CD8-positive, alpha-beta T cell (primary cell): ENCODE measurements at regions of chr5 and their contacts with region 1.

Region 1: DNA sequence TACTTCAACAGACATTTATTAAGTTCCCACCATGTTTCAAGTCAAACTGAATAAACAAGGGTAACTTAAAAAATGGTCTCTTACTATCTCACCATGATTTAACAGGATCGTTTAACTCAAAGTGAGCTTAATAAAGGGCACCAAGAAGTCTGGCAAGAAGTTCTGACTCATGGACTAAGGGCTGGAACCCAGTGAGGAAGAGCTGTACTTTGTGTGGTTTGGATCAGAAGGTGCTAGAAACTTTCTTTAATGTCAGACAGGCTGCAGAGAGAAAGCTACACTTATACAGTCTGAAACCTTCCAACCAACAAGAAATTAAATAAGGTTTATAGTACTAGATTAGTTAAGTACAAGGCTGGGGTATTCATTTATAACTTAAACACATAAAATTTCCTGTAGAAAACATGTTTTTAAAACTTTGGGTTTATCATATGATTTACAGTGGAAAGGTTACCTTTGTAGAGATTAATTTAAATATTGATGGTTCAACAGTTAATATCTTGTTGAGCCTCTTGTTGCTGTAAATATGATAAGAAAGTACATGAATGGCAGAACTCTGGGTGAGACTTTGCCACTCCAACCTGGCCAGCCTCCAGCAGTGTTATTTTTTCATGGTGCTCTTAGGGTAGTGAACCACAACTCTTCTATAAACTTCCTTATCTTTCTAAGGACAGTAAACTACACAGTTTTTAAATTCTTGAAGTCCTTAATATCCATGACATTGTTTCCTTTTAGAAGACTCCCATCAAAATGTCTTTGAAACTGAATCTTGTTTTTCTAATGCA is 162.8 kb downstream of the MAN2A1 start:
- DNase-seq: peak in 2 of 9 experiments; percentile 31 to 49
- ATAC-seq: peak; percentile 45
- H3K4me3 ChIP-seq: no peak overlapping the region
- H3K4me3 Mint-ChIP-seq: peak overlapping the region; percentile 24
- H3K27ac ChIP-seq: peak overlapping the region in 1 of 2 experiments; percentile 36
- H3K27ac Mint-ChIP-seq: peak overlapping the region; percentile 76
- H3K4me1 ChIP-seq: peaks cover 84% of the 10 kb centered on the region
- H3K4me1 Mint-ChIP-seq: peaks cover 87% of the 10 kb centered on the region
- H3K27me3 ChIP-seq: no peaks in the 10 kb centered on the region
- H3K27me3 Mint-ChIP-seq: no peaks in the 10 kb centered on the region
- CTCF ChIP-seq: no peak

Region 2: GRCh38 chr5:109812698-109813097 is 39.9 kb before region 1 on chr5:
- CTCF ChIA-PET with region 1: no interaction called
- POLR2A ChIA-PET with region 1: interaction called, 3 read pairs
- intact Hi-C with region 1: loop called in 1 of 2 experiments (anchors 5 kb)
- DNase-seq: no peak
- ATAC-seq: no peak
- H3K4me3 ChIP-seq: no peak overlapping the region
- H3K4me3 Mint-ChIP-seq: no peak overlapping the region
- H3K27ac ChIP-seq: no peak overlapping the region
- H3K27ac Mint-ChIP-seq: no peak overlapping the region
- H3K4me1 ChIP-seq: no peaks in the 10 kb centered on the region
- H3K4me1 Mint-ChIP-seq: peaks cover 20% of the 10 kb centered on the region
- H3K27me3 ChIP-seq: no peaks in the 10 kb centered on the region
- H3K27me3 Mint-ChIP-seq: no peaks in the 10 kb centered on the region
- CTCF ChIP-seq: no peak

Region 3: GRCh38 chr5:109865637-109866036 is 13.1 kb after region 1 on chr5:
- CTCF ChIA-PET with region 1: no interaction called
- POLR2A ChIA-PET with region 1: interaction called, 10 read pairs
- intact Hi-C with region 1: loop called in 1 of 2 experiments (anchors 1 kb)
- DNase-seq: no peak
- ATAC-seq: no peak
- H3K4me3 ChIP-seq: no peak overlapping the region
- H3K4me3 Mint-ChIP-seq: no peak overlapping the region
- H3K27ac ChIP-seq: no peak overlapping the region
- H3K27ac Mint-ChIP-seq: peak overlapping the region; percentile 66
- H3K4me1 ChIP-seq: peaks cover 57% of the 10 kb centered on the region
- H3K4me1 Mint-ChIP-seq: peaks cover 80% of the 10 kb centered on the region
- H3K27me3 ChIP-seq: no peaks in the 10 kb centered on the region
- H3K27me3 Mint-ChIP-seq: no peaks in the 10 kb centered on the region
- CTCF ChIP-seq: no peak

Region 4: DNA sequence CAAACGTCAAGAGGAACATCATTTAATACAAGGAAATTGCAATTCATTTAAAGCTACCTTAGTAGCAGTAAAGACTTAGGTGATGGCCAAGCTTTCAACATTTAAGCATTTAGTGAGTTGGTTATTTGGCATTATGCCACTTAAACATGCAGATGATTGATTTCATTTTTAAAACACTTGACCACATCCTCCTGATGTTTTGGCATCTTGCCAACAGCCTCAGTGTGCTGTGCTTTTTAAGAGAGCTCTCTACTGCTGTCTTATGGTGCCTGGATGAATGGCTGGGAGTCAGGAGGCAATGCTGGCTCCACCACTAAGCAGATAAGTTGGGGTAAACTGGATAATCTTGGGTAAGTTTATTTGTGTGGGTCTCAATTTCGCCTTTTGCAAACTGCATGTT is 201.7 kb after region 1 on chr5:
- CTCF ChIA-PET with region 1: interaction called, 3 read pairs
- POLR2A ChIA-PET with region 1: no interaction called
- intact Hi-C with region 1: loop called (anchors 5 kb)
- DNase-seq: peak; percentile 46 to 95 (median 71)
- ATAC-seq: peak; percentile 93
- H3K4me3 ChIP-seq: no peak overlapping the region
- H3K4me3 Mint-ChIP-seq: peak overlapping the region; percentile 24
- H3K27ac ChIP-seq: peak overlapping the region in 1 of 2 experiments; percentile 44
- H3K27ac Mint-ChIP-seq: peak overlapping the region; percentile 85
- H3K4me1 ChIP-seq: peaks cover 29% of the 10 kb centered on the region
- H3K4me1 Mint-ChIP-seq: peaks cover 43% of the 10 kb centered on the region
- H3K27me3 ChIP-seq: no peaks in the 10 kb centered on the region
- H3K27me3 Mint-ChIP-seq: no peaks in the 10 kb centered on the region
- CTCF ChIP-seq: peak; percentile 62